PC-9 (cell line): ENCODE measurements at regions of chr16 and their contacts with region 1.

Region 1: DNA sequence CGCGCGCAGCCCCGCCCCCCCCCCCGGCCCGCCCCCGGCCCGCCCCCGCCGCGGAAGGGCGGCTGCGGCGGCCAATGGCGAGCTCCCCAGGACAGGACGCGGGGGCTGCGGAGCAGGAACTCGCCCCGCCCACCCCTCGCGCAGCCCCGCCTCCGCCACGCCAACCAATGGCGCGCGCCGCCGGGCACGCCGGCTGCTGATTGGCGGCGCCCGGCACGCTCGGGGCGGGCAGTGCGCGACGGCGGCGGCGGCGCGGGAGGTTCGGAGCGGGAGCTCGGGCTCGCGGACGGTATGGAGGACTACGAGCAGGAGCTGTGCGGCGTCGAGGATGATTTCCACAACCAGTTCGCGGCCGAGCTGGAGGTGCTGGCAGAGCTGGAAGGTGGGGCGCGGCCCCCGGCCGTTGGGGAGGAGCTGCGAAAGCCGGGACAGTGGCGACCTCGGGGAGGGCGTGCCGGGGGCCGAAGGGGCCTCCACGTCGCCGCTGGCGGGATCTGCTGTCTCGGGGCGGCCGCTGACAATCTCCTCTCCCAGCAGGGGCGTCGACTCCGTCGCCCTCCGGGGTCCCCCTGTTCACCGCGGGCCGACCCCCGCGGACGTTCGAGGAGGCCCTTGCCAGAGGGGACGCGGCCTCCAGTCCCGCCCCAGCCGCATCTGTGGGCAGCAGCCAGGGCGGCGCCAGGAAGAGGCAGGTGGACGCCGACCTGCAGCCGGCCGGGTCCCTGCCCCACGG is at the start of gene CHTF18:
- DNase-seq: peak; percentile 74 to 97
- H3K4me3 ChIP-seq: peak within 1 kb of the TSS; percentile 96
- H3K27ac ChIP-seq: no peak within 1 kb of the TSS
- H3K4me1 ChIP-seq: peaks cover 16% of the 10 kb centered on the region
- H3K27me3 ChIP-seq: no peaks in the 10 kb centered on the region
- CTCF ChIP-seq: no peak
- total RNA-seq, gene CHTF18: 67.7 and 77.8 TPM in 2 replicates

Region 2: DNA sequence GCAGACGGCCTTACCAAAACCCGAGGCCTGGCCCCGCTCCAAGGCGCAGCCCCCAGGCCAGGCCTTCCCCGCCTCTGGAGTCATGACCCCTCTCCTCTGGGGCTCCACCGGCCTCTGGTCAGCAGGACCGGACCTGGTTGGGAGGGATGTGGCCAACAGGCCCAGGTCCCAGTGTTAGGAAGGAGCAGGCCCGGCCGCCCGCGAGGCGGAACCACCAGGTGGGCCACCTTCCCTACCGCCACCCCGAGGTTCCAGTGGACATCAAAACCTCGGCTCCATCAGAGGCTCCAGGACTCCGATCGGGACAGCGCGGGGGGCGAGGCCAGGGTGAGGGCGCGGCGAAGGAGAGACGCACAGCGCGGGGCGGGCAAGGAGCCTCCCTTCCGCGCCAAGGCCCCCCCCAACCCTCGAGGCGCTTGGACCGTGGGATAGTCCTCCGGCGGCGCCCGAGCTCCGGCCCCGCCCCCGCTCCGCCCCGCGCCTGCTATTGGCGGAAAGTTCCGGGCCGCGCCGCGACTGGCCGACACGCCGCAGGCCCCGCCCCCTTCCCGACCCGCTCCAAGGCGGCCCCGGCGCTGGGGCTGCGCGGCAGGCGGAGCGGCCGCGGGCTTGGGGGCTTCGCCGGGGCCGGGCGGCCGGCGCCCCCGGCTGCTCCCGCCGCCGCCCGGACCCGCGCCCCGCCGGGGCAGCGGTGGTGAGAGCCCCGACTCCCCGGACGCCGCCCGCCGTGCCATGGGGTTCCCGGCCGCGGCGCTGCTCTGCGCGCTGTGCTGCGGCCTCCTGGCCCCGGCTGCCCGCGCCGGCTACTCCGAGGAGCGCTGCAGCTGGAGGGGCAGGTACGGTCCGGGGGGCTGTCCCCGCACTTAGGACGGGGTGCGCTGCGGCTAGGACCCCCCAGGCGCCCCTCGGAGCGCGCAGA is 73.7 kb before region 1 on chr16 and contains the start of gene METRN:
- CTCF ChIA-PET with region 1: interaction called, 17 read pairs
- POLR2A ChIA-PET with region 1: interaction called, 9 read pairs
- intact Hi-C with region 1: loop called (anchors 1 kb)
- DNase-seq: peak; percentile 67 to 96
- H3K4me3 ChIP-seq: peak within 1 kb of the TSS; percentile 81
- H3K27ac ChIP-seq: no peak within 1 kb of the TSS; the same call in 1 of the 2 replicates
- H3K4me1 ChIP-seq: peaks cover 51% of the 10 kb centered on the region
- H3K27me3 ChIP-seq: peaks cover 13% of the 10 kb centered on the region
- CTCF ChIP-seq: no peak
- total RNA-seq, gene METRN: 77.5 and 88.5 TPM in 2 replicates

Region 3: GRCh38 chr16:720990-721764 is 67.4 kb before region 1 on chr16 and contains the start of gene ANTKMT:
- CTCF ChIA-PET with region 1: interaction called, 11 read pairs
- POLR2A ChIA-PET with region 1: interaction called, 6 read pairs
- intact Hi-C with region 1: loop called (anchors 2 kb)
- DNase-seq: peak; percentile 73 to 95
- H3K4me3 ChIP-seq: peak within 1 kb of the TSS; percentile 98
- H3K27ac ChIP-seq: peak within 1 kb of the TSS; percentile 55
- H3K4me1 ChIP-seq: peaks cover 31% of the 10 kb centered on the region
- H3K27me3 ChIP-seq: no peaks in the 10 kb centered on the region
- CTCF ChIP-seq: no peak; the same call in 1 of the 2 replicates
- total RNA-seq, gene ANTKMT: 55.0 and 102 TPM in 2 replicates

Region 4: DNA sequence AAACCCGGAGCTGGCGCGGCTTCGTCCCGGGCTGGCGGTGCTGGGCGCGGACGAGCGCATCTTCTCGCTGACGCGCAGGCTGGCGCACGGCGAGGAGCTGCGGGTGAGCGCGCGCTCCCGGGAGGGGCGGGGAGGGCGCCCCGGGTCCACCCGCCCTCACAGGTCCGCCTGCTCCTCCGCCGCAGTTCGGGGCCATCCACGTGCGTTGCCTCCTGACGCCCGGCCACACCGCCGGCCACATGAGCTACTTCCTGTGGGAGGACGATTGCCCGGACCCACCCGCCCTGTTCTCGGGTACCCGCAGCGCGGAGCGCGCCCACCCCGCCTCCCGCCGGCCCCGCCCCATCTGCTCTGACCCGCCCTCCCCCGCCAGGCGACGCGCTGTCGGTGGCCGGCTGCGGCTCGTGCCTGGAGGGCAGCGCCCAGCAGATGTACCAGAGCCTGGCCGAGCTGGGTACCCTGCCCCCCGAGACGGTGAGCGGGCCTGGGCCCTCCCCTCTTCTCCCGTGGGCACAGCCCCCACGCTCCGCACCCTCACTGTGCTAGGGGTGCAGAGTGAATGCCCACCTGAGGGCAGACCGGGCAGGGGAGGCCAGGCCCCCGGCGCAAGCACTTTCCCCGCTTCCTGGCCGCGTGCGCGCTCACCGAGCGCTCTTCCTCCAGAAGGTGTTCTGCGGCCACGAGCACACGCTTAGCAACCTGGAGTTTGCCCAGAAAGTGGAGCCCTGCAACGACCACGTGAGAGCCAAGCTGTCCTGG is 60.2 kb before region 1 on chr16:
- CTCF ChIA-PET with region 1: no interaction called
- POLR2A ChIA-PET with region 1: interaction called, 13 read pairs
- intact Hi-C with region 1: no loop called
- DNase-seq: peak; percentile 70 to 87
- H3K4me3 ChIP-seq: peak overlapping the region; percentile 93; the same call in 1 of the 2 replicates
- H3K27ac ChIP-seq: no peak overlapping the region
- H3K4me1 ChIP-seq: no peaks in the 10 kb centered on the region
- H3K27me3 ChIP-seq: no peaks in the 10 kb centered on the region
- CTCF ChIP-seq: no peak

Region 5: GRCh38 chr16:749001-749400 is 39.6 kb before region 1 on chr16:
- CTCF ChIA-PET with region 1: interaction called, 3 read pairs
- POLR2A ChIA-PET with region 1: interaction called, 24 read pairs
- intact Hi-C with region 1: no loop called
- DNase-seq: peak in 1 of 2 experiments; percentile 50
- H3K4me3 ChIP-seq: no peak overlapping the region
- H3K27ac ChIP-seq: no peak overlapping the region
- H3K4me1 ChIP-seq: no peaks in the 10 kb centered on the region
- H3K27me3 ChIP-seq: no peaks in the 10 kb centered on the region
- CTCF ChIP-seq: no peak

Region 6: GRCh38 chr16:760545-761343 is 27.8 kb before region 1 on chr16 and contains the start of gene MSLN:
- CTCF ChIA-PET with region 1: interaction called, 3 read pairs
- POLR2A ChIA-PET with region 1: interaction called, 41 read pairs
- intact Hi-C with region 1: no loop called
- DNase-seq: peak; percentile 51 to 92
- H3K4me3 ChIP-seq: no peak within 1 kb of the TSS
- H3K27ac ChIP-seq: no peak within 1 kb of the TSS
- H3K4me1 ChIP-seq: peaks cover 16% of the 10 kb centered on the region
- H3K27me3 ChIP-seq: no peaks in the 10 kb centered on the region
- CTCF ChIP-seq: no peak
- total RNA-seq, gene MSLN: 59.9 and 86.4 TPM in 2 replicates

Region 7: DNA sequence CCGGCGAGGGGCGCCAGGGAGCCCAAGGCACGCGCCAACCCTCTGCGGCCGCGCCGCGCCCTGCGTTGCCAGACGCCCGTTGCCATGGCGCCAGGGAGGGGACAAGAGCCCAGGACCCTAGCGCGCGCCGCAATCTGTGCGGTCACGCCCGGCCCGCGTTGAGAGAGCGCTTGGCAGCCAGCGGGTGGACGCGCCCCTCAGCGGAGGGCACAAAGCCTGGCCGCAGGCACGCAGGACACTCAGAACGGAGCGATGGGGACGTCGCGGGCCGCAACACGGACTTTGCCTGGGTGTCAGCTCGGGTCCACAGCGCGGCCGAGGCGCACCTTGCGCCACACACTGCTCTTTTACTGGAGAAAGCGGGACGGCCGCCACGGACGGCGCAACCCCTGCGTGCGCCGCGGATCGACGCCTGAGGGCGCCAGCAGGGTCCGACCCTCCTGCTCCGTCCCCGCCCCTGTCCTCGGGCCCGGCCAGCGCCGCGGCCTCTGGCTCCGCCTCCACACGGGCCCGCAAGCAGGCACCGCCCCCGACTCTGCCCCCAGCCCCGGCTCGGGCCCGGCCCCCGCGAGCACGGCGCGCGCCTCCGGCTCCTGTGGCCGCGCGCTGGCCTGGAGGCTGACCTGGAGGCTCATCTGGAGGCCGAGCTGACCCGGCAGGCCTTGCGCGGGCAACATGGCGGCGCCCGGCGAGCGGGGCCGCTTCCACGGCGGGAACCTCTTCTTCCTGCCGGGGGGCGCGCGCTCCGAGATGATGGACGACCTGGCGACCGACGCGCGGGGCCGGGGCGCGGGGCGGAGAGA is 1195.2 kb after region 1 on chr16 and contains the start of gene GFER:
- CTCF ChIA-PET with region 1: no interaction called
- POLR2A ChIA-PET with region 1: interaction called, 25 read pairs
- intact Hi-C with region 1: no loop called
- DNase-seq: peak; percentile 73 to 98
- H3K4me3 ChIP-seq: peak within 1 kb of the TSS; percentile 93
- H3K27ac ChIP-seq: no peak within 1 kb of the TSS
- H3K4me1 ChIP-seq: peaks cover 67% of the 10 kb centered on the region
- H3K27me3 ChIP-seq: no peaks in the 10 kb centered on the region
- CTCF ChIP-seq: no peak; the same call in 1 of the 2 replicates
- total RNA-seq, gene GFER: 59.7 and 63.8 TPM in 2 replicates